MCF 10A (cell line): ENCODE measurements at regions of chr3 and their contacts with region 1.

Region 1: DNA sequence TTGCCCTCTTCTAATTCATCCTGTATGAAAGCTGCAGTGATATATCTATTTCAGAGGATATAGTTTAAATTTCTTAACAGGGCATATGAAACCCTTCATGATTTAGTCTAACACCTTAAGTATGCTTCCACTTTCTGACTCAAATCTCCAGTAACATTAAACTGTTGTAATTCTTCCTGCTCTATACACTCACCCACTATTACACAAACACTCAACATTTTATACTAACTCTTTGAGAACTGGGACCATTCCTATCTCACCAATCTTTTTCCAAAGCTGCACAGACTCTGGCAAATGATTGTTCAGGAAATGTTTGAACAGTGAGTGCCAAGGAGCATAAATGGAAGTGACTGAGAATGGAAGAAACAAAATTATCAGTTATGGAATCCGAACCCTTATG is 560.4 kb upstream of the DPPA4 start:
- DNase-seq: no peak
- H3K4me3 Mint-ChIP-seq: no peak overlapping the region
- H3K27ac Mint-ChIP-seq: no peak overlapping the region
- H3K4me1 Mint-ChIP-seq: no peaks in the 10 kb centered on the region
- H3K27me3 Mint-ChIP-seq: no peaks in the 10 kb centered on the region
- CTCF ChIP-seq: no peak

Region 2: GRCh38 chr3:109910772-109911171 is 13.0 kb after region 1 on chr3:
- CTCF ChIA-PET with region 1: no interaction called
- POLR2A ChIA-PET with region 1: no interaction called
- intact Hi-C with region 1: no loop called
- DNase-seq: no peak
- H3K4me3 Mint-ChIP-seq: no peak overlapping the region
- H3K27ac Mint-ChIP-seq: no peak overlapping the region
- H3K4me1 Mint-ChIP-seq: no peaks in the 10 kb centered on the region
- H3K27me3 Mint-ChIP-seq: no peaks in the 10 kb centered on the region
- CTCF ChIP-seq: no peak

Region 3: DNA sequence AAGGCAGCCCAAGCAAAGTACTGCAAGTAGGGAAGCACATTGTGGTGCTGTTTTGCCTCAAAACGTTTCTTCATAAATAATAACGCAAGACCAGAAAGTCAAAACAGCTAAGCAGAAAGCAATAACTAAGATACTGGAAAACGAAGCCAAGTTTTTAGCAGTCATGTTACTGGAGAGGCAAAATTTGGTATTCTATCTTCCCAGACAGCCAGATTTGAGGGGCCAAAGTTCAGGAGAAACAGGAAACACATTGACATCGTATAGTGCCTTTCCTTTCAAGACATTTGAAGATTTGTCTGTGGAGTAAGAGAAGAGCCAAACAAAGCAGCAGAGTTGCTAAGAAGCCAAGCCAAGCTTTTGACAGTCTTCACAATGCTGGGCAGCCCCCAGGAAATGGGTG is 330.3 kb after region 1 on chr3:
- CTCF ChIA-PET with region 1: no interaction called
- POLR2A ChIA-PET with region 1: no interaction called
- intact Hi-C with region 1: loop called (anchors 10 kb)
- DNase-seq: no peak
- H3K4me3 Mint-ChIP-seq: no peak overlapping the region
- H3K27ac Mint-ChIP-seq: no peak overlapping the region
- H3K4me1 Mint-ChIP-seq: no peaks in the 10 kb centered on the region
- H3K27me3 Mint-ChIP-seq: no peaks in the 10 kb centered on the region
- CTCF ChIP-seq: no peak

Region 4: GRCh38 chr3:110307065-110307809 is 409.5 kb after region 1 on chr3:
- CTCF ChIA-PET with region 1: no interaction called
- POLR2A ChIA-PET with region 1: no interaction called
- intact Hi-C with region 1: no loop called
- DNase-seq: no peak
- H3K4me3 Mint-ChIP-seq: no peak overlapping the region
- H3K27ac Mint-ChIP-seq: no peak overlapping the region
- H3K4me1 Mint-ChIP-seq: no peaks in the 10 kb centered on the region
- H3K27me3 Mint-ChIP-seq: no peaks in the 10 kb centered on the region
- CTCF ChIP-seq: no peak